A673 (cell line): ENCODE measurements at regions of chr5 and their contacts with region 1.

Region 1: DNA sequence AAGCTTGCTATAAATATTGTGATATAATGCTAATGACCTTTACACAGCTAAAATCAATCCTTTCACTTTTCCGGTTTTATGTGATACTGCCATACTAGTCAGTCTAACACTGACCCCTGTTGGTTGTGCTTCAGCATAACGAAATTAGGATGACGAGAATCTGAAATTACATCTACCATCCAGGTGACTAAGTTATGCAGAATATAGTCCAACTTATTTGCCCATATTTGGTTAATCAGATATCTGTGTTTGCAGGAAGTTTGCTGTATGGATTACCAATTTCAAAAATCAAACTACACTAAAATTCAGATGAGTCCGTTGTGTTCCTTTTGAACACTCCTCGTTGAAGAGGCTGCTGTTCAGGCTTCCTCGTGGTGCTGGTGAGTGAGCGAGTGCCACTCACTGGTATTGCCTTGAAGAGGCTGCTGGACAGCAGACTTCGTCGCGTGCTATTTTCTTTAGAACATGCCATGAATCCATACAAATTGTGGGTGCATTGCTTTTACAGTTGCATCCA is 32.5 kb downstream of the TENT4A start:
- DNase-seq: peak; percentile 63
- H3K4me3 ChIP-seq: no peak overlapping the region
- H3K27ac ChIP-seq: no peak overlapping the region
- H3K4me1 ChIP-seq: peaks cover 15% of the 10 kb centered on the region
- H3K27me3 ChIP-seq: no peaks in the 10 kb centered on the region
- CTCF ChIP-seq: peak; percentile 78

Region 2: DNA sequence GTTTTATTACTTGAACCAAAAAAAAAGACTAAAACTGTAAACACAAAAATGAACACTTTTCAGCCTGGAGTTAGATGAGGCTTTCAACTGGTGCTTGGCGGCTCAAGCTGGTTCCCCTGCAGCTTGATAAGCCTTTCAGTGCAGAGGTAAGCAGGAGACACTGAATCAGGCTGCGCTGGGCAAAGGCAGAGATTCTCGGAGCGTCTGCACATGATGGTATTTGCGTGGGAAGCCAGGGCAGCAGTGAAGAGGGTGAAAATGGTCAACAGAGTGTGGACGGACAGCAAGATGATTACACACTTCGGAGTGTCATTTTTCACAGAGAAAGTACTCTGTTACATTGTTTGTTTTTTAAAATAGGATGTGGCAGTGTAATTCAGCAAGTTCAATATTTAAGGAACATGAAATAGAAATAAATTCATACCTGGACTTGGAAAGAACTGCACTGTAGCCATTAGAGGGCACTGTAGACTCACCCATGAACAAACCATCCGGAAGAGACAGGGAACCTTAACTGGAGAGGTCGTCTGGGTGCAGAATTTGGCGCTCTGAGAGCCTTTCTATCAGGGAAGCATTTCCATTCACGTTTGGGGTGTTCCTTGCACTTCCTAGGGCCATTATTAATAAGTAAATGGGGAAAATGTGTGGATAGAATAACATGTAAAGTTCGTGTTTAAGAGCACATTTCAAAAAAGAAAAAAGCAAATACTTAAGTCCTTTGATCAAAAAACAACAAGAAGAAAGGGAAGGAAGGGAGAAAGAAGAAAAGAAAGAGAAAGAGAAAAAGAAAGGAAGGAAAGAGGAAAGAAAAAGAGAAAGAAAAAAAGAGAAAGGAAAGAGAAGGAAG is 1253.5 kb before region 1 on chr5:
- CTCF ChIA-PET with region 1: interaction called, 4 read pairs
- POLR2A ChIA-PET with region 1: no interaction called
- intact Hi-C with region 1: loop called (anchors 10 kb)
- DNase-seq: peak; percentile 80
- H3K4me3 ChIP-seq: no peak overlapping the region
- H3K27ac ChIP-seq: no peak overlapping the region
- H3K4me1 ChIP-seq: peaks cover 3% of the 10 kb centered on the region
- H3K27me3 ChIP-seq: peaks cover 6% of the 10 kb centered on the region
- CTCF ChIP-seq: peak; percentile 82

Region 3: GRCh38 chr5:6632917-6633468 is 112.8 kb before region 1 on chr5 and contains the starts of genes NSUN2 and SRD5A1:
- CTCF ChIA-PET with region 1: no interaction called
- POLR2A ChIA-PET with region 1: no interaction called
- intact Hi-C with region 1: loop called (anchors 1 kb)
- DNase-seq: peak; percentile 93
- H3K4me3 ChIP-seq: peak within 1 kb of the TSS; percentile 99
- H3K27ac ChIP-seq: peak within 1 kb of the TSS; percentile 100
- H3K4me1 ChIP-seq: peaks cover 7% of the 10 kb centered on the region
- H3K27me3 ChIP-seq: no peaks in the 10 kb centered on the region
- CTCF ChIP-seq: no peak
- total RNA-seq, gene NSUN2: 102 and 111 TPM in 2 replicates
- total RNA-seq, gene SRD5A1: 32.0 and 32.4 TPM in 2 replicates